ENCODE measurements at regions of chr13 and their contacts with region 1.

Region 1: GRCh38 chr13:113509989-113510388 is 19.5 kb upstream of the DCUN1D2 start:
- DNase-seq: no peak
- H3K4me3 ChIP-seq: no peak overlapping the region
- H3K27ac ChIP-seq: no peak overlapping the region
- H3K4me1 ChIP-seq: no peaks in the 10 kb centered on the region
- H3K27me3 ChIP-seq: no peaks in the 10 kb centered on the region
- CTCF ChIP-seq: no peak

Region 2: DNA sequence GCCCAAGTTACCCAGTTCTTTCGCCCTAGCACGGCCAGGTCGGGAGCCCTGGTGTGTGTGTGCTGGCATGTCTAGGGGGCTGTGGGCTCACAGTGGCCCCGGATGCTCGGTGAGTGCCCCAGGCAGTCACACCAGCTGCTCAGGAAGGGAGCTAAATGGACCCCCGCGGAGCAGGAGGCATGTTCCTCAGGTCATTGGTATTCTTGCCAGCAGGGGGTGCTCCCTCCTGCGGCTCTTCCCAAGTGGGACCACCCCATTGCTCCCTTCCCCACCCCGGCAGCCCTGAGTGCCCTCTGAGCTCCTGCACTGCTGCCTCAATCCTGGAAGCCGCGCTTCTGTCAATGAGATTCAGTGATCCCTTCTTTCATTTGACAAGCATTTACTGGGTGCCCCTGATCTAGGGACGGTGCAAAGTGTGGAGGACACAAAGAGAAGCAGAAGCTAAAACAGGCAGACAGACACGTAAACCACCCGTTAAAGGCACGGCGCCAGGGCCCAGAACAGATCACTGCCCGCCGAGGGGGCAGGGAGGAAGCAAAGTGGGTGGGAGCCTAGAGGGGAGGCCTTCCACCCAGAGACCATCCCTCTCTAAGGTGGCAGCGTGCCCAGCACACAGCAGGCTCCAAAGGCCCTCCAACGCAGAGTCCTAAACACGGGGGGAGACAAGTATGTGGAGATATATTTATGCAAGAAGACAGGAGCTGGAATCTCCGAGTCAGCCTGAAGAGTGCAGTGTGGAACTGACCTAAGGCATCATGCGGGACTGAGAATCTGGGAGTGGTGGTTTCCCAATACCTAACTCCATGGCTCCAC is 51.5 kb before region 1 on chr13:
- CTCF ChIA-PET with region 1: no interaction called
- dilution Hi-C with region 1: loop called (anchors 5 kb)
- in situ Hi-C with region 1: no loop called
- intact Hi-C with region 1: no loop called
- DNase-seq: no peak
- H3K4me3 ChIP-seq: no peak overlapping the region
- H3K27ac ChIP-seq: no peak overlapping the region
- H3K4me1 ChIP-seq: no peaks in the 10 kb centered on the region
- H3K27me3 ChIP-seq: no peaks in the 10 kb centered on the region
- CTCF ChIP-seq: peak; percentile 13 to 41

Region 3: DNA sequence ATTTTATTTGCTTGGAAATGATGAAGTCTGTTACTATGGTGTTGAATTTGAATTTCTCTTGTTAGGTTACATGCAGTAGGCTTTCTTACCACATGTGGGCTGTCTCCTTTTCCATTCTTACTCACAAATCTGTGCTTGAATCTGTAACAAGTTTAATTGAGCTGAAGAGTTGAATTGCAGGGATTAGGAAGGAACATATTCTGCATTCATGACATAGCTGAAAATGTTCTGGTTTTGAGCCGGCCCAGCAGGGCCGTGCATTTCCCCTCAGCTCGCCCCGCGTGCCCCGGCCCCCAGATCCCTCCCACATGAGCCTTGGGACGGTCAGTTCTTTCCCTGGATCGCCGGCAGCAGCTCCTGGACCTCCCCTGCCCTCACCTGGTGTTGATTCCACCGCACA is 102.6 kb after region 1 on chr13:
- CTCF ChIA-PET with region 1: no interaction called
- dilution Hi-C with region 1: loop called (anchors 5 kb)
- in situ Hi-C with region 1: no loop called
- intact Hi-C with region 1: no loop called
- DNase-seq: no peak
- H3K4me3 ChIP-seq: no peak overlapping the region
- H3K27ac ChIP-seq: no peak overlapping the region
- H3K4me1 ChIP-seq: no peaks in the 10 kb centered on the region
- H3K27me3 ChIP-seq: no peaks in the 10 kb centered on the region
- CTCF ChIP-seq: no peak